CD8-positive, alpha-beta T cell (primary cell): ENCODE measurements at regions of chr22 and their contacts with region 1.

Region 1: GRCh38 chr22:43036282-43036829 is 21.4 kb upstream of the PACSIN2 start:
- DNase-seq: no peak
- ATAC-seq: no peak
- H3K4me3 ChIP-seq: no peak overlapping the region
- H3K4me3 Mint-ChIP-seq: no peak overlapping the region
- H3K27ac ChIP-seq: no peak overlapping the region
- H3K27ac Mint-ChIP-seq: no peak overlapping the region
- H3K4me1 ChIP-seq: no peaks in the 10 kb centered on the region
- H3K4me1 Mint-ChIP-seq: peaks cover 4% of the 10 kb centered on the region
- H3K27me3 ChIP-seq: no peaks in the 10 kb centered on the region
- H3K27me3 Mint-ChIP-seq: no peaks in the 10 kb centered on the region
- CTCF ChIP-seq: no peak

Region 2: GRCh38 chr22:42662114-42663021 is 374.0 kb before region 1 on chr22:
- CTCF ChIA-PET with region 1: no interaction called
- POLR2A ChIA-PET with region 1: no interaction called
- intact Hi-C with region 1: loop called in 1 of 2 experiments (anchors 5 kb)
- DNase-seq: peak; percentile 60 to 88 (median 80)
- ATAC-seq: peak; percentile 90
- H3K4me3 ChIP-seq: peak overlapping the region; percentile 60 to 61
- H3K4me3 Mint-ChIP-seq: peak overlapping the region; percentile 75
- H3K27ac ChIP-seq: no peak overlapping the region
- H3K27ac Mint-ChIP-seq: no peak overlapping the region
- H3K4me1 ChIP-seq: peaks cover 6% of the 10 kb centered on the region
- H3K4me1 Mint-ChIP-seq: no peaks in the 10 kb centered on the region
- H3K27me3 ChIP-seq: no peaks in the 10 kb centered on the region
- H3K27me3 Mint-ChIP-seq: peaks cover 6% of the 10 kb centered on the region
- CTCF ChIP-seq: peak; percentile 86

Region 3: GRCh38 chr22:42863349-42863961 is 172.9 kb before region 1 on chr22:
- CTCF ChIA-PET with region 1: interaction called, 12 read pairs
- POLR2A ChIA-PET with region 1: no interaction called
- intact Hi-C with region 1: loop called in 1 of 2 experiments (anchors 1 kb)
- DNase-seq: peak in 2 of 9 experiments; percentile 32
- ATAC-seq: peak; percentile 45
- H3K4me3 ChIP-seq: no peak overlapping the region
- H3K4me3 Mint-ChIP-seq: no peak overlapping the region
- H3K27ac ChIP-seq: no peak overlapping the region
- H3K27ac Mint-ChIP-seq: no peak overlapping the region
- H3K4me1 ChIP-seq: no peaks in the 10 kb centered on the region
- H3K4me1 Mint-ChIP-seq: peaks cover 12% of the 10 kb centered on the region
- H3K27me3 ChIP-seq: no peaks in the 10 kb centered on the region
- H3K27me3 Mint-ChIP-seq: no peaks in the 10 kb centered on the region
- CTCF ChIP-seq: no peak

Region 4: GRCh38 chr22:42895087-42895486 is 141.3 kb before region 1 on chr22:
- CTCF ChIA-PET with region 1: no interaction called
- POLR2A ChIA-PET with region 1: no interaction called
- intact Hi-C with region 1: loop called in 1 of 2 experiments (anchors 10 kb)
- DNase-seq: peak in 4 of 9 experiments; percentile 17 to 83 (median 44)
- ATAC-seq: peak; percentile 81
- H3K4me3 ChIP-seq: no peak overlapping the region
- H3K4me3 Mint-ChIP-seq: no peak overlapping the region
- H3K27ac ChIP-seq: peak overlapping the region; percentile 8 to 84
- H3K27ac Mint-ChIP-seq: peak overlapping the region; percentile 78
- H3K4me1 ChIP-seq: peaks cover 31% of the 10 kb centered on the region
- H3K4me1 Mint-ChIP-seq: peaks cover 33% of the 10 kb centered on the region
- H3K27me3 ChIP-seq: no peaks in the 10 kb centered on the region
- H3K27me3 Mint-ChIP-seq: no peaks in the 10 kb centered on the region
- CTCF ChIP-seq: no peak

Region 5: GRCh38 chr22:42994881-42995562 is 41.3 kb before region 1 on chr22:
- CTCF ChIA-PET with region 1: no interaction called
- POLR2A ChIA-PET with region 1: no interaction called
- intact Hi-C with region 1: no loop called
- DNase-seq: peak in 1 of 9 experiments; percentile 16
- ATAC-seq: no peak
- H3K4me3 ChIP-seq: no peak overlapping the region
- H3K4me3 Mint-ChIP-seq: no peak overlapping the region
- H3K27ac ChIP-seq: no peak overlapping the region
- H3K27ac Mint-ChIP-seq: no peak overlapping the region
- H3K4me1 ChIP-seq: peaks cover 3% of the 10 kb centered on the region
- H3K4me1 Mint-ChIP-seq: peaks cover 38% of the 10 kb centered on the region
- H3K27me3 ChIP-seq: no peaks in the 10 kb centered on the region
- H3K27me3 Mint-ChIP-seq: no peaks in the 10 kb centered on the region
- CTCF ChIP-seq: no peak